Mammary epithelial cell (primary cell): ENCODE measurements at regions of chr17 and their contacts with region 1.

Region 1: DNA sequence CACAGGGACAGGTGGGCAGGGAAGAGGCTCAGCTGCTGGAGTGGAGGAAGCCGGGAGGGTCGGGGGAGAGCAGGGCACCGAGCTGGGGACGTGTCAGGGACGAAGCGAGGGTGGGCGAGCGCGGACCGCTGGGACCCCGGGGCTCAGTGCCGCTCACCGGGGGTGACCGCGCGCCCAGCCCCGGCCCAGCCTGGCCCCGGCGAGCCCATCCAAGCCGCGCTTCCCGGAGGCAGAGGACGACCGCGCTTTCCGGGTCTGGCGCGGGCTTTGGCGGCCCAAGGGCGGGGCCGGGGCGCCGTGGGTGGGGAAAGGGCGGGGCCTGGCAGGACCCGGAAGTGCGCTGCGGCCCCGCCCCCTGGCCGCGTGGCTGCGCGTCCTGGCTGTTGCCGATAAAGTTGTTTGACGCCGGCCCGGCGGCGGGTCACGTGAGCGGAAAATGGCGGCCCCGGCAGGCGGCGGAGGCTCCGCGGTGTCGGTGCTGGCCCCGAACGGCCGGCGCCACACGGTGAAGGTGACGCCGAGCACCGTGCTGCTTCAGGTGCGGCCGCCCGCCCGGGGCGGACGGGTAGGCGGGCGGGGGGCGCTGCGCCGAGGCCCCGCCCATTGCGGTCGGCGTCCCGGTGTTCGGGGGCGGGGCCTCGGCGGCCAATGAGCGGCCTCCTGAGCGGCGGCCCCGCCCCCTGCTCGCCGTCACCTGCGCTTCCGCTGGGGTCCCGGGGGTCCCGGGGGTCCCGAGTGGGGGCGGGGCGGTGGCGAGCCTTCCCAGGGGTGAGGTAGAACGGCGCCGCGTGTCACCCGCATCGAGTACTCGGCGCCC is at the start of gene ASPSCR1:
- DNase-seq: peak; percentile 84
- H3K4me3 ChIP-seq: peak within 1 kb of the TSS; percentile 66 to 98 (median 73)
- H3K27ac ChIP-seq: peak within 1 kb of the TSS; percentile 80
- H3K4me1 ChIP-seq: peaks cover 16% of the 10 kb centered on the region
- H3K27me3 ChIP-seq: no peaks in the 10 kb centered on the region
- CTCF ChIP-seq: no peak
- total RNA-seq, gene ASPSCR1: 13.3 to 21.3 TPM

Region 2: GRCh38 chr17:81890447-81891299 is 86.7 kb before region 1 on chr17:
- CTCF ChIA-PET with region 1: no interaction called
- dilution Hi-C with region 1: loop called (anchors 5 kb)
- in situ Hi-C with region 1: no loop called
- intact Hi-C with region 1: no loop called
- DNase-seq: no peak
- H3K4me3 ChIP-seq: peak overlapping the region; percentile 80 to 88 (median 87)
- H3K27ac ChIP-seq: peak overlapping the region; percentile 77
- H3K4me1 ChIP-seq: peaks cover 21% of the 10 kb centered on the region
- H3K27me3 ChIP-seq: no peaks in the 10 kb centered on the region
- CTCF ChIP-seq: no peak

Region 3: DNA sequence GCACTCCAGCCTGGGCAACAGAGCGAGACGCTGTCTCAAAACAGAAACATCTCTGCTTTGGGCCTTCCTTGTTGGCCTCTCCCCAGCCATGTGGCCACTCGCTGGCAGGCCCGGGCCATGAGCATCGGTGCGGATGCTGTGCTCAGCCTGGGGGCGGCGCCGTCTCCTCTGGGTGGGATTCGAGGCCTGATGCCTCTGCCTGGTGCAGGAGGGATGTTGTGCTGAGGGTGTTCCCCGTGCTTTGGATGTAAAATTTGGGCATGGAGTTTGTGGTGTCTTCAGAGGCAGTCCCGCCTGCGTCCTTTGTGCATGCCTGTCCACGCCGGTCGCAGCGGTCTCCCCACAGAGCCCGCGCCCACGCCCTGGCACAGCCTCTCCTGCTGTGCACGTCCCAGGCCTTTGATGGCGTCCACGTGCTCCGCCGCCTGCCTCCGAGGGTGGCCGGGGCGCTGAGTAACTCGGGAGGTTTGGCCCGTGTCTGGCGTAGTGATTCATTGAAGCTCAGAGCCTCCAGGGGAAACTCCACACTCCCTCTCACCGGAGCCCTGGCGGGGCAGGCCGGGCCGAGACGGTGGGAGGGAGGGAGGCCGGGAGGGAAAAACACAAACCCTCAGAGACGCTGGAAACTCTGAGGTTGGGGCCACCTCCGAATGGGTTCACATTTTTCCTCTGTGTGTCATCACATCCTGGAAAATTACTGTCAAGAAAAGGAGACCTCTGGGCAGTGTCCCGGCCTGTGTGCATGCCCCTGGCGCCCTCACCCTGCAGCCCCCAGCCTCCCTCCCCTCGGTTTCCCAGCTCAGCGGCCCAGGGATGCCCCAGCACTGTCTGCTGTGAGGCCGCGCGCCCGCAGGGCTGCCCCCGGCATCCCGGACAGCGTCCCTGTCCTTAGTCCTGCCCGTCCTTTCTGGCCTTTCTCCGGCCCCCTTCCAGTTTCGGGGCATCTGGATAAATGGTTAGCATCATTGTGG is 26.3 kb after region 1 on chr17:
- CTCF ChIA-PET with region 1: no interaction called
- dilution Hi-C with region 1: no loop called
- in situ Hi-C with region 1: no loop called
- intact Hi-C with region 1: loop called (anchors 2 kb)
- DNase-seq: peak; percentile 97
- H3K4me3 ChIP-seq: no peak overlapping the region
- H3K27ac ChIP-seq: no peak overlapping the region
- H3K4me1 ChIP-seq: peaks cover 33% of the 10 kb centered on the region
- H3K27me3 ChIP-seq: no peaks in the 10 kb centered on the region
- CTCF ChIP-seq: peak in 1 of 2 donors; percentile 2

Region 4: DNA sequence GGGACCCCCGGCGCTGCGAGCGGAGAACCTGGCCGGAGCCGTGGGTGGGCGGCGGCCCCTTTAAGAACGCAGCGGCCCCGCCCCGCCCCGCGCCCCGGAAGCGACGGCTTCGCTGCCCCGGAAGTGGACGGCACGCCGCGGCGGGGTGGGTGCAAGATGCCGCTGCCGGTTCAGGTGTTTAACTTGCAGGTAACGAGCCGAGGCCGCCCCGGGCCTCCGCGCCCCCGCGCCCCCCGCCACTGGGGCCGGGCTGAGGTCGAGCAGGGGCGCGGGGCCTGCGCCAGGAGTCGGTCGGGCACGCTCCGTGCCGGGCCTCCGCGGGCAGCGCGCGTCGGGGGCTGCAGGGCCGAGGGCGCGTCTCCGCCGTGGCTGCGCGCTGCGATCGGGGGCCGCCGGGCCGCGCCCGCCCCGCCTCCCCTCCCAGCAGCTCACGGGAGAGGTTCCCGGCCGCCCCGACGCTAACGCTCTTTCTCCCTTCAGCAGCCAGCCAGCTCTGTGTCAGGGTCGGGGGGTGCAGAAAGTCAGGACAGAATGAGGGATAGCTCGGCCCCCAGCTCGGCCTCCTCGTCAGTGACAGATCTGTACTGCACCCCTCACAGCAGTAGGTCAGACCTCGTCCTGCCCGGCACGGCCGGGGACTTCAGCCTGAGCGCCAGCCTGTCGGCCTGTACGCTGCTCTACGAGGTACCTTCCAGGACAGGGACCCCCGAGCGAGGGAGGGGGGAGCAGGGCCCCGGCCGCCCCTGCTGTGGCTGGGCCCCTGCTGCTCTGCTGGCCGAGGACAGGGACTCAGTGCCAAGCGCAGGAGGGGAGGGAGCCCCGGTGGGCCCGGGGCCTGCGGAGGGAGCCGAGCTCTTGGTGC is 74.6 kb after region 1 on chr17 and contains the starts of genes GPS1 and RFNG:
- CTCF ChIA-PET with region 1: no interaction called
- dilution Hi-C with region 1: loop called (anchors 5 kb)
- in situ Hi-C with region 1: no loop called
- intact Hi-C with region 1: no loop called
- DNase-seq: peak; percentile 59
- H3K4me3 ChIP-seq: peak within 1 kb of the TSS; percentile 61 to 86 (median 65)
- H3K27ac ChIP-seq: peak within 1 kb of the TSS; percentile 30
- H3K4me1 ChIP-seq: peaks cover 23% of the 10 kb centered on the region
- H3K27me3 ChIP-seq: no peaks in the 10 kb centered on the region
- CTCF ChIP-seq: no peak
- total RNA-seq, gene GPS1: 84.2 to 98.2 TPM
- total RNA-seq, gene RFNG: 37.7 to 38.2 TPM

Region 5: DNA sequence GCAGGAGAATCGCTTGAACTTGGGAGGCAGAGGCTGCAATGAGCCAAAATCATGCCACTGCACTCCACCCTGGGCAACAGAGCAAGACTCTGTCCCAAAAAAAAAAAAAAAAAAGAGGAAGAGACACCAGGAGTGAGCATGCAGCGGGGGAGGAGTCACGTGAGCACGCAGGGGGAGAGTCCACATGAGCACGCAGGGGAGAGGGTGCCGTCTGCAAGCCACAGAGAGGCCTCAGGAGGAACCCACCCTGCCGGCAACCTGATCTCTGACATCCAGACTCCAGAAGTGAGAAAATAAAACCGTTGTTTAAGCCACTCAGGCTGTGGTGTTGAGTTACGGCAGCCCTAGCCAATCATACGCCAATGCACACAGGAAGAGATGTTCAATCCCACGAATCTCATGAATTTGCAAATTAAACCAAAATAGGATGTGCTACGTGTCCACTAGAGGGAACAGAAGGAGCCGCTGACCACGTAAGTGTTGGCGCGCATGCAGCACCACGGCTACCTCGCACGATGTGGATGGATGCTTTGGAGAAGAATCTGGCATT is 193.1 kb after region 1 on chr17:
- CTCF ChIA-PET with region 1: no interaction called
- dilution Hi-C with region 1: loop called (anchors 10 kb)
- in situ Hi-C with region 1: no loop called
- intact Hi-C with region 1: no loop called
- DNase-seq: no peak
- H3K4me3 ChIP-seq: no peak overlapping the region
- H3K27ac ChIP-seq: no peak overlapping the region
- H3K4me1 ChIP-seq: no peaks in the 10 kb centered on the region
- H3K27me3 ChIP-seq: no peaks in the 10 kb centered on the region
- CTCF ChIP-seq: no peak

Region 6: DNA sequence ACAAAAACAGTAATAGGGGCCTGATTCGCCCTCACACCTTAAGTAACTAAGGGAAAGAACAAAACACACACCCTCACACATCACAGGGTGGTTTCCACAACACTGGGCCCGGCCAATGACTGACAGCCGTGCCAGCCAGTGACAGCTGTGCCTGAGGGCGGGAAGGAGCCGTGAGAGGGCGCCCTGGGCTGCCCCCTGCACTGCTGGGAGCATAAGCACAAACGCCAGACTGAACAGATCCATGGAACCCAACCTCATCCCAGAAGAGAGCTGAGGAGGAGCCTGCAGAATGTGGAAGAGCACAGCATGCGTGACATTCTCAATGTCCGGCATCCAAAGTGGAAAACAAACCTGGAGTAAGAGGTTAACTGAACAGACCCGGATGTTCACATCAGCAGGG is 280.1 kb after region 1 on chr17:
- CTCF ChIA-PET with region 1: no interaction called
- dilution Hi-C with region 1: no loop called
- in situ Hi-C with region 1: no loop called
- intact Hi-C with region 1: no loop called
- DNase-seq: peak; percentile 67
- H3K4me3 ChIP-seq: no peak overlapping the region
- H3K27ac ChIP-seq: peak overlapping the region; percentile 33
- H3K4me1 ChIP-seq: no peaks in the 10 kb centered on the region
- H3K27me3 ChIP-seq: no peaks in the 10 kb centered on the region
- CTCF ChIP-seq: no peak